ENCODE measurements at regions of chr1 and their contacts with region 1.

Region 1: GRCh38 chr1:89605692-89606091 is 27.2 kb upstream of the LRRC8C start:
- DNase-seq: no peak
- ATAC-seq: no peak
- H3K4me3 ChIP-seq: peak overlapping the region; percentile 17
- H3K4me3 Mint-ChIP-seq: peak overlapping the region in 8 of 10 donors; percentile 52 to 96 (median 88)
- H3K27ac ChIP-seq: peak overlapping the region; percentile 92
- H3K27ac Mint-ChIP-seq: peak overlapping the region; percentile 97 to 100 (median 99)
- H3K4me1 ChIP-seq: peaks cover 82 to 85% of the 10 kb centered on the region in 2 donors
- H3K4me1 Mint-ChIP-seq: peaks cover 44 to 96% (median 93%) of the 10 kb centered on the region in 7 donors
- H3K27me3 ChIP-seq: no peaks in the 10 kb centered on the region
- H3K27me3 Mint-ChIP-seq: no peaks in the 10 kb centered on the region

Region 2: GRCh38 chr1:88891318-88891950 is 714.3 kb before region 1 on chr1 and contains the start of gene GTF2B:
- CTCF ChIA-PET with region 1: no interaction called
- POLR2A ChIA-PET with region 1: no interaction called
- intact Hi-C with region 1: loop called (anchors 2 to 5 kb)
- DNase-seq: peak; percentile 86 to 96 (median 94)
- ATAC-seq: peak; percentile 97
- H3K4me3 ChIP-seq: peak within 1 kb of the TSS; percentile 86
- H3K4me3 Mint-ChIP-seq: peak within 1 kb of the TSS; percentile 87 to 99 (median 95)
- H3K27ac ChIP-seq: peak within 1 kb of the TSS; percentile 91
- H3K27ac Mint-ChIP-seq: peak within 1 kb of the TSS; percentile 93 to 98 (median 97)
- H3K4me1 ChIP-seq: peaks cover 26 to 27% of the 10 kb centered on the region in 2 donors
- H3K4me1 Mint-ChIP-seq: peaks cover 23 to 59% (median 48%) of the 10 kb centered on the region in 7 donors
- H3K27me3 ChIP-seq: no peaks in the 10 kb centered on the region
- H3K27me3 Mint-ChIP-seq: peaks cover 0 to 2% (median 0%) of the 10 kb centered on the region in 5 donors
- total RNA-seq, gene GTF2B: 41.3 to 53.6 (median 47.3) TPM

Region 3: GRCh38 chr1:89483010-89483756 is 122.5 kb before region 1 on chr1:
- CTCF ChIA-PET with region 1: no interaction called
- POLR2A ChIA-PET with region 1: interaction called, 11 read pairs
- intact Hi-C with region 1: loop called in 1 of 2 experiments (anchors 1 kb)
- DNase-seq: peak; percentile 37 to 77 (median 67)
- ATAC-seq: peak; percentile 97
- H3K4me3 ChIP-seq: no peak overlapping the region
- H3K4me3 Mint-ChIP-seq: no peak overlapping the region
- H3K27ac ChIP-seq: no peak overlapping the region
- H3K27ac Mint-ChIP-seq: no peak overlapping the region
- H3K4me1 ChIP-seq: no peaks in the 10 kb centered on the region
- H3K4me1 Mint-ChIP-seq: peaks cover 0 to 18% (median 9%) of the 10 kb centered on the region in 7 donors
- H3K27me3 ChIP-seq: no peaks in the 10 kb centered on the region
- H3K27me3 Mint-ChIP-seq: peaks cover 0 to 5% (median 0%) of the 10 kb centered on the region in 5 donors

Region 4: DNA sequence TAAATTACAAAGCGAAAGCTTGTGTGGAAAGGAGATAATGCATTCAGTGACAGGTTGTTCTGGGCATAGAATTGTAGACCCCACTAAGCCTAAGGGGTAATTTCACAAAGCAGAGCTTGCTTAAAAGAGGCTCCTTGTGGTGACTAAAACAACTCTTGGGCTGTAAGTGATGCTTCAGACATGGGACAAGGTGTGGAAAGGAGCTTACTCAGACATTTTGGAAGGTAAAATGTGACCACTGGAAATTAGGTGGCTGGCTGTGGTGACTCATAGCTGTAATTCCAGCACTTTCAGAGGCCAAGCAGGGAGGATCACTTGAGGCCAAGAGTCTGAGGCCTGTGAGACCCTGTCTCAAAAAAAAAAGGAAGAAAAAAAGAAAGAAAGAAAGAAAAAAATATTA is 23.8 kb before region 1 on chr1:
- CTCF ChIA-PET with region 1: interaction called, 49 read pairs
- POLR2A ChIA-PET with region 1: interaction called, 488 read pairs
- intact Hi-C with region 1: loop called in 1 of 2 experiments (anchors 1 kb)
- DNase-seq: no peak
- ATAC-seq: no peak
- H3K4me3 ChIP-seq: no peak overlapping the region
- H3K4me3 Mint-ChIP-seq: no peak overlapping the region
- H3K27ac ChIP-seq: no peak overlapping the region
- H3K27ac Mint-ChIP-seq: peak overlapping the region in 4 of 9 donors; percentile 5 to 61 (median 48)
- H3K4me1 ChIP-seq: no peaks in the 10 kb centered on the region
- H3K4me1 Mint-ChIP-seq: peaks cover 6 to 42% (median 27%) of the 10 kb centered on the region in 7 donors
- H3K27me3 ChIP-seq: no peaks in the 10 kb centered on the region
- H3K27me3 Mint-ChIP-seq: no peaks in the 10 kb centered on the region

Region 5: DNA sequence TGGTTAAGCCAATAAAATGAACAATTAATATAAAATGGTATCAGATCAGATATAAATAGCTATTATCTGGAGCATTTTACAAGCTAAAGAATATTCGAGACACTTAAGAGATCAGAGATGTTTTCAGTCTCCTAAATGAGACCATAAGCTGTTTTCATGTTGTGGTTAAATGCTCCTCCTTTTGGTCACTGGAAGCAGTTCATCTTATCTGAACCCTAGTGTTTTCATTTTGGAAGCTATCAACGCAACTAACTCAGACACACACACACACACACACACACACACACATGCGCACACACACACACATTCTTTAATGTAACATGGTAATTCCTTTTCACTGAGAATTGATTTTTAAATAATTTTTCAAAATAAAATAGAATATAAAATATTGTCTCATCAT is 17.2 kb after region 1 on chr1:
- CTCF ChIA-PET with region 1: interaction called, 86 read pairs
- POLR2A ChIA-PET with region 1: interaction called, 834 read pairs
- intact Hi-C with region 1: no loop called
- DNase-seq: peak in 5 of 9 donors; percentile 29 to 58 (median 39)
- ATAC-seq: peak; percentile 71
- H3K4me3 ChIP-seq: no peak overlapping the region
- H3K4me3 Mint-ChIP-seq: peak overlapping the region in 3 of 10 donors; percentile 16 to 54 (median 31)
- H3K27ac ChIP-seq: no peak overlapping the region
- H3K27ac Mint-ChIP-seq: peak overlapping the region in 8 of 9 donors; percentile 35 to 98 (median 78)
- H3K4me1 ChIP-seq: peaks cover 9 to 22% of the 10 kb centered on the region in 2 donors
- H3K4me1 Mint-ChIP-seq: peaks cover 15 to 78% (median 61%) of the 10 kb centered on the region in 7 donors
- H3K27me3 ChIP-seq: no peaks in the 10 kb centered on the region
- H3K27me3 Mint-ChIP-seq: no peaks in the 10 kb centered on the region

Region 6: DNA sequence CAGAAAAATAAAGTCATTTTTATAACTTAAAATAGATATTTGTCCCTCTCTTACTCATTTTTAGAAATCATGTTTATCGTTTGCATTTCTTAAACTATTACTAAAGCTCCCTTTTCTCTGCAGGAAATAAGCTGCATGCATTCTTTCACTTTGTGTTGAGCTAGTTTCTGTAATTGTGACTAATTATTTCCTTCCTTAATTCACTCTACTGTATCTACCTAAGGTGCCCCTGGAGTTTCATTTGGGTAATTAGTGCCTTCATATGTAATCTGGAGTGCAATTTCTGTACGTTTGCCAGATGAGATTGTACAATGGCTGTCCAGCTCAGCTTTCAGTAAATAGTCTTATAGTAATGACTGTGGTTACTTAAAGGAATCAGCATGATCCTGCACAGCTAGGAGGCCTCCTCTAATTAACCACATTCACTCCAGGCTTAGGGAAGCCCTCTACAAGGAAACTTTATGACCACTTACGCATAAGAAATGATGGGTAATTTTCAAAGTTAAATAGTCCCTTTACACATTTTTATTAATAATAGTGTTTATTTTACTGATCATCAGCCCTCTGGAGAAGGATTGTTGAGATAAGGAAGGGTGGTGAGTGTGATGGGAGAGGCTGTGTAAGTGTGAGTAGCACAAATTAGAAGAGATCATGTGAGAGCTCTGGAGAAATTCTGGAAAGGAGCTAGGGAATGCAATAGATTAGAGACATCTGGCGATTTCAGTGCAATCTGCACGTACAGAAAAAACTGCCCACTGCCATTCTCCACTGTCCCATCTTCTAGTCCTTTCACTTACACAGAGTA is 114.0 kb after region 1 on chr1:
- CTCF ChIA-PET with region 1: no interaction called
- POLR2A ChIA-PET with region 1: interaction called, 7 read pairs
- intact Hi-C with region 1: loop called in 1 of 2 experiments (anchors 1 kb)
- DNase-seq: no peak
- ATAC-seq: peak; percentile 77
- H3K4me3 ChIP-seq: no peak overlapping the region
- H3K4me3 Mint-ChIP-seq: peak overlapping the region in 9 of 10 donors; percentile 1 to 82 (median 48)
- H3K27ac ChIP-seq: peak overlapping the region; percentile 10
- H3K27ac Mint-ChIP-seq: peak overlapping the region; percentile 1 to 97 (median 66)
- H3K4me1 ChIP-seq: peaks cover 27 to 57% of the 10 kb centered on the region in 2 donors
- H3K4me1 Mint-ChIP-seq: peaks cover 34 to 82% (median 75%) of the 10 kb centered on the region in 7 donors
- H3K27me3 ChIP-seq: no peaks in the 10 kb centered on the region
- H3K27me3 Mint-ChIP-seq: no peaks in the 10 kb centered on the region

Region 7: GRCh38 chr1:89820422-89821321 is 215.0 kb after region 1 on chr1 and contains the start of gene LRRC8D:
- CTCF ChIA-PET with region 1: no interaction called
- POLR2A ChIA-PET with region 1: interaction called, 11 read pairs
- intact Hi-C with region 1: no loop called
- DNase-seq: peak; percentile 46 to 80 (median 57)
- ATAC-seq: peak; percentile 84
- H3K4me3 ChIP-seq: peak within 1 kb of the TSS; percentile 84
- H3K4me3 Mint-ChIP-seq: peak within 1 kb of the TSS; percentile 85 to 97 (median 89)
- H3K27ac ChIP-seq: peak within 1 kb of the TSS; percentile 66
- H3K27ac Mint-ChIP-seq: peak within 1 kb of the TSS; percentile 67 to 92 (median 81)
- H3K4me1 ChIP-seq: peaks cover 7 to 14% of the 10 kb centered on the region in 2 donors
- H3K4me1 Mint-ChIP-seq: peaks cover 20 to 44% (median 36%) of the 10 kb centered on the region in 7 donors
- H3K27me3 ChIP-seq: no peaks in the 10 kb centered on the region
- H3K27me3 Mint-ChIP-seq: peaks cover 0 to 20% (median 0%) of the 10 kb centered on the region in 5 donors
- total RNA-seq, gene LRRC8D: 21.1 to 42.6 (median 37.3) TPM

Measured in naive thymus-derived CD4-positive, alpha-beta T cell (primary cell).